ENCODE measurements at regions of chrX and their contacts with region 1.

Region 1: GRCh38 chrX:30504309-30504708 is 73.3 kb downstream of the TASL start:
- DNase-seq: no peak
- H3K4me3 ChIP-seq: no peak overlapping the region
- H3K27ac ChIP-seq: no peak overlapping the region
- H3K4me1 ChIP-seq: no peaks in the 10 kb centered on the region
- H3K27me3 ChIP-seq: no peaks in the 10 kb centered on the region
- CTCF ChIP-seq: peak; percentile 24

Region 2: DNA sequence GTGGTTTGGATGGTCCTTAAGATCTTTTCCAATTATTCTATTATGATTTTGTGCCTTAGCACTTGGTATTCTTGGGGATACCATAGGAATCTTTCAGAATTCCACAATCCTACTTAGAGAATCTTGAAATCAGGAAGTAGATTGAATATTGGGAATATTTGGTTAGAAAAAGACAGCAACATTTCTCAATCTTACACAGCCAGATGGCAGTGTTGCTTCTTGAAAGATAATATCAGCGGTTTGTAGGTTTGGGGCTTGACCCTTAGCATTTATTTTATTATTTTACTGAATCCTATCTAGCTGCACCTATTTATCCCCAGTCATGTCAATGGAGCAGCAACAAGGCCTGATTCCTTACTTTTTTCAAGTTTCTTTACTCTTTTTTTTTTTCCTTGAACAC is 228.8 kb before region 1 on chrX:
- intact Hi-C with region 1: loop called (anchors 10 kb)
- DNase-seq: no peak
- H3K4me3 ChIP-seq: no peak overlapping the region
- H3K27ac ChIP-seq: no peak overlapping the region
- H3K4me1 ChIP-seq: no peaks in the 10 kb centered on the region
- H3K27me3 ChIP-seq: peaks cover 4% of the 10 kb centered on the region
- CTCF ChIP-seq: no peak

Region 3: GRCh38 chrX:30388325-30388724 is 116.0 kb before region 1 on chrX:
- intact Hi-C with region 1: no loop called
- DNase-seq: no peak
- H3K4me3 ChIP-seq: no peak overlapping the region
- H3K27ac ChIP-seq: no peak overlapping the region
- H3K4me1 ChIP-seq: no peaks in the 10 kb centered on the region
- H3K27me3 ChIP-seq: no peaks in the 10 kb centered on the region
- CTCF ChIP-seq: no peak